Left colon (tissue), 2 donors: ENCODE measurements at regions of chr1 and their contacts with region 1.

Region 1: DNA sequence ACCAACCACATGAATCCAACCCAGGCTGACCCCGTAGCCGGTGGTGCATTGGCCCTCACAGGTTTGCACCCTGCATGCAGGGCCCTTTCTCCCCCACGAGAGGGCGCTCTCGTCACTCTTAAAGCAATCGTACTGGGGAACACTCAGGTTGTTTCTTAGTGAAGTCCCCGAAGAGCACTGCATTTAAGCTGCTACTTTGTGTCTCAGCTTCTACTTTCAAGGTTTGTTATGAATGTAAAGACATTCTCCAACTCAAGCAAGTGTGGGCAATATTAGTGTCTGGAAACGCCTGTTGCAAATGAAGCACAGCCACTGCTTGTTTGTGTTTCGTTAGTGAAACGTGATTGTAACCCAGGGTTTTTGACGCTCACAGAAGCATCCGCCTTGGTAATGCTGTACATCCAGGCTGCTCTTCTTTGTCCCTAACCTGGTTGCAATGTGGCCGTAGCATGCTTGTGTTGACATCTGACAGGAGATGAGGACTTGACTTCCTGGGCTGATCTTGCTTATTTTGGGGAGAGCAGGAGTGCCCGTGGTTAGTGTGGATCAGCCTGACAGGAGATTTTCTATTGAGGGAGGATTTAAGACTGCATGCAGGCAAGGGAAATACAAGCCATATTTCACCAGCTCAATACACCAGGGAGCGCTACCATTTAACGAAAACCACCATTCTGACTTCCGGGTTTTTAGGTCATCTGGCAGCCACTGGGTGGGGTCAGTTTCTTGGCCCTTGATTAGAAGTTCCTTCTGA is 79.8 kb downstream of the ST6GALNAC3 start:
- DNase-seq: peak; percentile 64 to 80
- ATAC-seq: peak; percentile 92

Region 2: DNA sequence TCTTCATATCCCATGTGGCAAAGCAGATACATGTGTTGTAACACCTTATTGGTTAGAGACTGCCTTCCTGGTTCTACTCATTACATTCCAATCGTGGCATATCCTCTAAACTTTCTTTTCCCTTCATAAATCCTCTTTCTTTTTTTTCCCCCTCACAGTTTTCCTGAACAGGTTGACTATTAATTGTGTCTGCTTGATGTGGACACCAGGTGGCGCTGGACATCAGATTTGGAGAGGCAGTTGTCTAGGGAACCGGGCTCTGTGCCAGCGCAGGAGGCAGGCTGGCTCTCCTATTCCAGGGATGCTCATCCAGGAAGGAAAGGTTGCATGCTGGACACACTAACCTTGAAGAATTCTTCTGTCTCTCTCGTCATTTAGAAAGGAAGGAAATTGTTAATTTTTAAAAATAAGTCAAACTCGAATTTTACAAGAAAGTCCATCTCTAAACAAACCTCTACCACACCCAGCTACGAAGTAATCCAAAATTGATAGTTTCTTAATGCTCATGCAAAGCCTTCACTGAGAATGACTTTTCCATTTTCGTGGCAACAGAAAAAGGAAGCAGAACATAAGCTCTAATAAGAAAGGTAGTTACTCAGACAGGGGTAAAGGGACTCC is 162.8 kb before region 1 on chr1:
- intact Hi-C with region 1: loop called in 1 of 2 experiments (anchors 5 kb)
- DNase-seq: peak; percentile 87 to 96
- ATAC-seq: peak; percentile 94

Region 3: GRCh38 chr1:77126307-77126706 is 971.9 kb after region 1 on chr1:
- intact Hi-C with region 1: loop called in 1 of 2 experiments (anchors 10 kb)
- DNase-seq: no peak
- ATAC-seq: peak; percentile 62